HepG2 (cell line): ENCODE measurements at regions of chr4 and their contacts with region 1.

Region 1: GRCh38 chr4:16264798-16265197 is 38.5 kb upstream of the TAPT1 start:
- DNase-seq: peak; percentile 36
- ATAC-seq: peak; percentile 68; the same call in 2 of the 3 replicates
- H3K4me3 ChIP-seq: no peak overlapping the region
- H3K27ac ChIP-seq: no peak overlapping the region
- H3K4me1 ChIP-seq: no peaks in the 10 kb centered on the region
- H3K27me3 ChIP-seq: no peaks in the 10 kb centered on the region
- CTCF ChIP-seq: peak; percentile 66
- EP300 ChIP-seq: no peak
- POLR2A ChIP-seq: no peak
- RAD21 ChIP-seq: peak; percentile 45; the same call in 1 of the 2 replicates

Region 2: GRCh38 chr4:16026160-16026761 is 238.5 kb before region 1 on chr4:
- CTCF ChIA-PET with region 1: interaction called, 43 read pairs
- POLR2A ChIA-PET with region 1: no interaction called
- in situ Hi-C with region 1: loop called (anchors 5 kb)
- intact Hi-C with region 1: loop called (anchors 1 kb)
- DNase-seq: peak; percentile 44
- ATAC-seq: peak; percentile 26; the same call in 1 of the 3 replicates
- H3K4me3 ChIP-seq: no peak overlapping the region
- H3K27ac ChIP-seq: no peak overlapping the region
- H3K4me1 ChIP-seq: peaks cover 20% of the 10 kb centered on the region
- H3K27me3 ChIP-seq: no peaks in the 10 kb centered on the region
- CTCF ChIP-seq: peak; percentile 80
- EP300 ChIP-seq: no peak
- POLR2A ChIP-seq: no peak
- RAD21 ChIP-seq: peak; percentile 77

Region 3: DNA sequence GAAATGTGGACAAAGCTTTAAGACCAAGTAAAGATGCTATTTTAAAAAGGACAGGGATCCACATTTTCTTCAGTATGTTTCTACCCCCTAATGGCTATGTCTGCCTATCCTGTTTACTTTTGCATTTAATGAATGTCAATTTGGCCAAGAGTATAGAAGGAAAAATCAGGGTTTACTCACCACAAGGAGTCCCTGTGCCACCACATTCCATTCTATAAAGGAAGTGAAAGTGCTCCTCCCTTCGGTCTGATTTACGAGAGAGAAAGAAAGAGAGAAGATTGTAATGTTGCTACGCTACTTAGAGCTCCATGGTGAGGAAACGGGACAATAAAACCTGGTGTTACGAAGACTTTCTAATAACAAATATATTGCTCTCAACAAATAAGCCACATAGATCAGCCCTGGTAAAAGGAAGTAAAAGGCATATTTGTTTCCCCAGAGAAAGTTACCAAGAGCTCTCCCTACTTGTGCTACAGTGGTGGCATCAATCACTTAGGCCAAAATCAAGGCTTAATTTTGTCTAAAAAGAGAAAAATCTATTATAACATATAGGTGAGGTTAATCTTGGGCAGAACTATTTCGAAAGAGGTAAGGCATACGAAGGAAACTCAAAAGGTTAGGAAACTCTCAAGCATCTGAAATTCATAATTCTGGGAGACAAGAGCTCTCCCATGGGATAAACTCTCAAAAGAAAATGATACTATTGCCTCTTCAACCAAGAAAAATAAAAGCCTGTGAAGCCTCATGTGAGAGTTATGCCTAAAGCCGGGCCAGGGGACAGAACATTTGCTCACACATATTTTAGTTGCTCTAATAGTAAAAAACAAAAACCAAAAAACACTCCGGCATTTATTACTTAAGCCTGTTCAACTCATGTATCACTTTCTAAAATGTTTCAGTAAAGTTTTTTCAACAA is 68.1 kb before region 1 on chr4:
- CTCF ChIA-PET with region 1: interaction called, 3 read pairs
- POLR2A ChIA-PET with region 1: no interaction called
- in situ Hi-C with region 1: no loop called
- intact Hi-C with region 1: loop called (anchors 2 kb)
- DNase-seq: peak; percentile 4
- ATAC-seq: no peak
- H3K4me3 ChIP-seq: no peak overlapping the region
- H3K27ac ChIP-seq: no peak overlapping the region
- H3K4me1 ChIP-seq: no peaks in the 10 kb centered on the region
- H3K27me3 ChIP-seq: no peaks in the 10 kb centered on the region
- CTCF ChIP-seq: no peak
- EP300 ChIP-seq: no peak
- POLR2A ChIP-seq: no peak
- RAD21 ChIP-seq: no peak

Region 4: DNA sequence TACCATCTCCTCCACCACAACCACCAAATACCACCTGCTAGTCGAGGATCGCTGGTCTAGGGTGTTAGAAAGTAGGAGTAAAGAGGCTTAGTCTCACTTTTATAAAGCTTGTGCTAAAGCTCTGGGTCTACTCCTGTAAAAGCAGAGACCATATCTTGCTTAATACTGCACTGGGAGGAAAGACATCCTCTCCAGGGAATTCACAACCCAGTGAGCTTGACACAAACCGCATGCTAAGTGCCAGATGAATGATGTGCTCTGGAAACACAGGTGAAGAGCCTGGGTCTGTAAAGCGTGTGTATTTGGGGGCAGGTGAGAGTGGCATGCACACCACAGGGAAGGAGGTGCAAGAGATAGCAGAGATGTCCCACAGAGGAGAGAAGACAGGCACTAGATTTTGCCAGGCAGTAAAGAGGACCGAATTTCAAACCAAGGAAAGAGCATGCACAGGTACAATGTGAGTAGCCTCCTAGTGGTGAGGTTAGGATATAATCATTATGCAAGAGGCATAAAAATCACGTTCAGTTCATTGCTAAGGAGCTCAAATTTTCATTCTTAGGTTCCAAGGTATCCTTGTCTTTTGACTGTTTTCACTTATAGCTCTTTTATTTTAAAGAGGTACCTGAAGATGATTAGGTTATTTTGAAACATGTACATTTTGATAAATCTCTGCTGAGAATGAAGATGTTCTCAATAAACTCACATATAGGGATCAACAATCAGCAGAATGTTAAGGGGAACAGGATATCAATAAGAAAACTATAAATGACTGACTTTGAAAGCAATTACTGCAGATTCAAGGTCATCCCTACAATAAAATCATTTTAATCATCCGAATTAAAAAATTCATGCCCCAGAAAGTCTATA is 59.3 kb before region 1 on chr4:
- CTCF ChIA-PET with region 1: interaction called, 3 read pairs
- POLR2A ChIA-PET with region 1: no interaction called
- in situ Hi-C with region 1: loop called (anchors 10 kb)
- intact Hi-C with region 1: loop called (anchors 2 kb)
- DNase-seq: peak; percentile 31
- ATAC-seq: peak; percentile 79
- H3K4me3 ChIP-seq: no peak overlapping the region
- H3K27ac ChIP-seq: no peak overlapping the region
- H3K4me1 ChIP-seq: no peaks in the 10 kb centered on the region
- H3K27me3 ChIP-seq: no peaks in the 10 kb centered on the region
- CTCF ChIP-seq: peak; percentile 61
- EP300 ChIP-seq: no peak
- POLR2A ChIP-seq: no peak
- RAD21 ChIP-seq: peak; percentile 38; the same call in 1 of the 2 replicates

Region 5: GRCh38 chr4:16217300-16218051 is 47.3 kb before region 1 on chr4:
- CTCF ChIA-PET with region 1: no interaction called
- POLR2A ChIA-PET with region 1: no interaction called
- in situ Hi-C with region 1: loop called (anchors 10 kb)
- intact Hi-C with region 1: loop called (anchors 2 kb)
- DNase-seq: no peak
- ATAC-seq: no peak
- H3K4me3 ChIP-seq: no peak overlapping the region
- H3K27ac ChIP-seq: no peak overlapping the region
- H3K4me1 ChIP-seq: peaks cover 22% of the 10 kb centered on the region
- H3K27me3 ChIP-seq: no peaks in the 10 kb centered on the region
- CTCF ChIP-seq: no peak
- EP300 ChIP-seq: no peak
- POLR2A ChIP-seq: no peak
- RAD21 ChIP-seq: no peak

Region 6: DNA sequence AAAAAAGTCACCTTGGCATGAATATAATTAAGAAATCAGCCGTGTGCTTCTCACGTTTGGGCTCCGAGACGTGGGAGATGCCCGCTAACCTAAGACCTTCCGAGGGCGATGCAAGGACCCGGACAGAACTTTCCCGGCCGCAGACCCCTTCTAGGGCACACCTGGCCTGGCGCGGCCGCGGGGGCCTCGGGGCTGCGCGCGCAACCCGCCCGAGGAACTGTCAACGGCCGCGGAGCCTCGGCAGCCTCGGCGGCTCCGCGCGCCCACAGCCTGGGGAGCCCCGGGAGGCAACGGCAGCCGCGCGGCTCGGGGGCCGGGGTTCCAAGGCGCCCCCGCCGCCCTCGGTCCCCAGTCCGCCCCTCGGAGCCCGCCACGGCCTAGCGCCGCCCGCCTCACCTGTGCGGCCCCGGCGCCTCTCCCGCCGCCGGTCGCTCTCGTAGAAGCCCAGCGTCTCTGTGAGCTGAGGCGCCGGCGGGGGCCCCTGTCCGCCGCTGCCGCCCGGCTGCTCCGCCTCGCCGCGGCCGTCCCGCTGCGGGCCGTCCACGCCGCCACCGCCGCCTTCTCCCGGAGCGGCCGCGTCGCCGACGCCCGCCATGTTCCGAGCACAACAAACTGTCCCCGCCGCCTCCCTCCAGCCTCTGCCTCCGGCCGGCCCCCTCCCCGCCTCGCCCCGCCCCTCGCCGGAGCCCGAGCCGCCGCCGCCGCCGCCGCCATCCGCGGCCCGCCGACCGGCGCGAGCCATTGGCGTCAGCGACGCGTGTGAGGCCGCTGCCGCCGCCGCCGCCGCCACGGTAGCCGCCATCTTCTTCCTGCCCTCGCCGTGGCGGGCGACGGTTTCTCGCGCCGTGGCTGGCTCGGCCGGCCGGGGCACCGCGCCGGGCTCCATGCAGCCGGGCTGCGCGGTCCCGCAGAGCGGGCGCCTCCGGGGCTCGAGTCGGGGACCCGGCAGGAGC is 38.7 kb before region 1 on chr4 and contains the start of gene TAPT1:
- CTCF ChIA-PET with region 1: no interaction called
- POLR2A ChIA-PET with region 1: no interaction called
- in situ Hi-C with region 1: no loop called
- intact Hi-C with region 1: loop called (anchors 2 kb)
- DNase-seq: no peak
- ATAC-seq: peak; percentile 50
- H3K4me3 ChIP-seq: peak within 1 kb of the TSS; percentile 83 to 96 (median 94)
- H3K27ac ChIP-seq: peak within 1 kb of the TSS; percentile 90
- H3K4me1 ChIP-seq: peaks cover 51% of the 10 kb centered on the region
- H3K27me3 ChIP-seq: no peaks in the 10 kb centered on the region; a peak in 1 of 5 replicates
- CTCF ChIP-seq: no peak
- EP300 ChIP-seq: no peak
- POLR2A ChIP-seq: peak in 1 of 2 experiments; percentile 54; a peak in 1 of 4 replicates
- RAD21 ChIP-seq: 0 out of 2 replicates have a peak, but pooled peaks have one; percentile 13
- total RNA-seq, gene TAPT1: 16.3 and 24.5 TPM in 2 replicates

Region 7: DNA sequence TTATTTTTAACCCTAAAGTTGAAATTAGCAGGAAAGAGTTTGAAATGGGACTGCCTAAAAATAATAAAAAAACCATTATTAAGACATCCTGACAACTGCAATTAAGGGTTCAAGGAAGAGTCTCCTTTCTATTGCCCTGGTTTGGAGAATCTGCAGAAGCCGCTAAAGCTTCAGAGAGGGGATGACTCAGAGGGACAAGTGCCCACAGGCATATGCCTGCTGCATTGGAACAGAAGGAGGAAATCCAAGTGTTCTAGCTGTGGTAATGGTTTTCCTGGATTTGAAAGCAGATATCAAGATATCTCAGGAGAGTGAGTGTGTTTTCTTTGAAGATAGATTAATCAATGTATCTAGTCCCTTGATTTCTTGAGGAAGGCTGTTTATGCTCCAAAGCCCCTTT is 196.6 kb after region 1 on chr4:
- CTCF ChIA-PET with region 1: no interaction called
- POLR2A ChIA-PET with region 1: no interaction called
- in situ Hi-C with region 1: no loop called
- intact Hi-C with region 1: no loop called
- DNase-seq: no peak
- ATAC-seq: no peak
- H3K4me3 ChIP-seq: no peak overlapping the region
- H3K27ac ChIP-seq: no peak overlapping the region
- H3K4me1 ChIP-seq: no peaks in the 10 kb centered on the region
- H3K27me3 ChIP-seq: no peaks in the 10 kb centered on the region; a peak in 1 of 5 replicates
- CTCF ChIP-seq: no peak
- EP300 ChIP-seq: no peak
- POLR2A ChIP-seq: no peak
- RAD21 ChIP-seq: no peak